Activated CD4-positive, alpha-beta memory T cell treated with anti-CD3 and anti-CD28 coated beads, Interleukin-2, amount 10 ng/mL, durations not matched to agents 7 days and 5 days (primary cell): ENCODE measurements at regions of chr1 and their contacts with region 1.

Region 1: GRCh38 chr1:165707984-165708706 is 9.8 kb upstream of the ALDH9A1 start:
- DNase-seq: no peak
- H3K4me3 Mint-ChIP-seq: no peak overlapping the region
- H3K27ac Mint-ChIP-seq: no peak overlapping the region
- H3K4me1 Mint-ChIP-seq: no peaks in the 10 kb centered on the region
- H3K27me3 Mint-ChIP-seq: peaks cover 37% of the 10 kb centered on the region

Region 2: GRCh38 chr1:165403835-165404482 is 304.2 kb before region 1 on chr1:
- CTCF ChIA-PET with region 1: no interaction called
- POLR2A ChIA-PET with region 1: no interaction called
- DNase-seq: peak; percentile 51
- H3K4me3 Mint-ChIP-seq: no peak overlapping the region
- H3K27ac Mint-ChIP-seq: no peak overlapping the region
- H3K4me1 Mint-ChIP-seq: no peaks in the 10 kb centered on the region
- H3K27me3 Mint-ChIP-seq: peaks cover 40% of the 10 kb centered on the region

Region 3: DNA sequence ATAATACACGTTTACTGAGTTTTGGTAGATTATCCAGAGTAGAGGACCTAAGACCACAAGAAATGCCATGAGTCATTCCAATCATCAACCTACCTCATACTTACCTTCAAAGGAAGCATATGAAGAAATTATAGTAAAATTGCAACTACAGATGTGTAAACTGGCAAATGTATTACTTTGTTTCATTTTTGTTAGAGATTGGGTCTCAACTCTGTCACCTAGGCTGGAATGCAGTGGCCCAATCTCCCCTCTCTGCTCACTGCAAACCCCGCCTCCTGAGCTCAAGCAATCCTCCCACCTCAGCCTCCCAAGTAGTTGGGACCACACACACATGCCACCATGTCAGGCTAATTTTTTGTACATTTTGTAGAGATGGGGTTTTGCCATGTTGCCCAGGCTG is 55.3 kb after region 1 on chr1:
- CTCF ChIA-PET with region 1: no interaction called
- POLR2A ChIA-PET with region 1: no interaction called
- DNase-seq: no peak
- H3K4me3 Mint-ChIP-seq: no peak overlapping the region
- H3K27ac Mint-ChIP-seq: no peak overlapping the region
- H3K4me1 Mint-ChIP-seq: peaks cover 55% of the 10 kb centered on the region
- H3K27me3 Mint-ChIP-seq: no peaks in the 10 kb centered on the region

Region 4: DNA sequence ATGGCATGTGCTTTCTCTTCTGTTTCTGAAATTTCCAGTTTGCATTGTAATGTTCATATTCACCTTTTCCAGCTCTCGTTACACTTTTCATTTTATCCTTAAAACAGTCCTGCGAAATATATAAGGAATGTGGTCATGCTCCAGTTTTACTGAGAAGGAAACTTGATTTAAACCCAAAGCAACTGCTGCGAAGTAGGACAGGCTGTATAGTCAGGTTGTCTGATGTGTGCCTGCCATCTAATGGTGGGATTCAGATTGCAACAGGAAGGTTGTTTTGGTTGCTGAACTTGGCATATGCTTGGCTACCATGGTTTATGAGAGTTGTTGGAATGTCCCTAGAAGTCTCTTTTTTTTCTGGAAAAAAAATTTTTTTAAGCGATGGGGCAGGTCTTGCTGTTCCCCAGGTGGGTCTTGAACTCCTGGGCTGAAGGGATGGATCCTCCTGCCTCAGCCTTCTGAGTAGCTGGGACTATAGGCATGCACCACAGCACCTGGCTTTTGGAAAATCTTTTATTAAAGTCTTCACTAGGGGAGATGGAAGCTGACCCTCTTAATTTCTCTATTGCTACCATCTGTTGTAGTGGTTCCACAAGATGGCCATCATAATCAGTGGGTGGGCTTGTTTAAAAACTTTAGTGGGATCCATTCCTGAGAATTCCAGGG is 206.1 kb after region 1 on chr1:
- CTCF ChIA-PET with region 1: interaction called, 10 read pairs
- POLR2A ChIA-PET with region 1: no interaction called
- DNase-seq: peak; percentile 72
- H3K4me3 Mint-ChIP-seq: no peak overlapping the region
- H3K27ac Mint-ChIP-seq: no peak overlapping the region
- H3K4me1 Mint-ChIP-seq: peaks cover 4% of the 10 kb centered on the region
- H3K27me3 Mint-ChIP-seq: no peaks in the 10 kb centered on the region